ENCODE measurements at regions of chr6 and their contacts with region 1.

Region 1: DNA sequence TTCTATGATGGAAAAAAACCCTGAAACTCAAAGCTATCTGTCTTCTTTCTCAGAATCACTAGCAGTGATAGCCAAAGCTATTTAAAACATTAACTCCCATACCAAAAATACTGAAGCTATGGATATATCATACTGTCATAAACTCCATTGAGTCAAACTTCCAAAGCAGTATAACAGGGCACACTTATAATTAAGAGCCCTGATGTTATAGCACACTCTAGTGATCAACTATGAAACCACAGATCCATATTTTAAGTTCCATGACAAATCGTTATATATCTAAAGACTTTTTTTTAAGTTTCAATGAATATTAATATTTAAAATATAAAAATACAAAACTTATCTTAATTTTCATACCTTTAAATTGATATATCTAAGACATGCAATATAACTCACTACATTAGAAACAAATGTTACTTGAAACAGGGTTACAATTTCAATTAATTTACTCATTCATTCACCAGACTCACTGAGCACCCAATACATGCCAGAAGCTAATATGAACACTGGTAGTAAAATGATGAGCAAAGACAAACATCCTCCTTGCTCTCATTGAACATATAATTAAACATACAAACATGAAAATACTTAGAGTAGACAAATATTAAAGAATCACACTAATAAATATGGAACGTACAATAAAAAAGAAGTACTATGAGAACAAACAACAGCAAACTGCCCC is 69.3 kb downstream of the IBTK start:
- DNase-seq: no peak
- ATAC-seq: peak in 6 of 8 donors; percentile 63 to 84 (median 80)
- H3K4me3 ChIP-seq: no peak overlapping the region
- H3K27ac ChIP-seq: peak overlapping the region in 3 of 10 donors; percentile 1 to 42 (median 16)
- H3K4me1 ChIP-seq: peaks cover 0 to 21% (median 7%) of the 10 kb centered on the region in 9 donors
- H3K27me3 ChIP-seq: no peaks in the 10 kb centered on the region
- CTCF ChIP-seq: peak; percentile 47 to 75 (median 64)

Region 2: DNA sequence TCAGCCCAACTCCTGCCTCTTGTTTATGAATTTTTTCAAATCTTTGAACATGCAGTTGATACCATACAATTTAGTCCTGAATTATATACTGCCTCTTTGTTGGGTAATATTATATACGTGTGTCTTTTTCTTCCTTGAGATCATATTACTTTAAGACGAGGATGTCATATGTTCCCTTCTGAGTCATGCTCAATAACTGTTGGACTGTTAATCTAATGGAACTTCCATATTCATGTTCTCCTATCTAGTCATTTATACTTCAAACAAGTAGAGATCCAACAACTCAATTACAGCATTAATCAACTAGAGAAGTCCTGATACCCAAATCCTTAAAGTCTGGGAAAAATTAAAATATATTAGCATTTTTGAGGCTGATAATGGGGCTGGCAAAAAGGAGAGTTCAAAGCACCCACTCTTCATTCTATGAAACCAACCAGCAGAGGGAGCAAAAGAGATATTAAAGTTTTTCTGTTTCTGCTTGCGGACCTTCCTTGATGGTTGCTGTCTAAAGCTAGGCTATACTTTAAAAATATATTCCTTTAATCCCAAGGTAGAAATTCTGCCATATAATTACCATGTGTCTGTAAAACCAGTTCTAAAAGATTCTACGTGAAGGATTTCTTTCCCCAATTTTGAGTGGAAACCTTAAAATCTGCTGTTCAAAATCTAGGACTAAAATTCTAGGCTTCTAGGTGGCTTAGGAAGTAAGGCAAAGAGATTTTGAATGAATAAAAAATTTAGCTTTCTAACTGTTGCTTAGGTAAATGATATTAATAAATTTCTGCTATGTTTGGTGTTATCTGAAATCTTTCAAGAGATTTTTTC is 1572.8 kb before region 1 on chr6:
- intact Hi-C with region 1: loop called in 1 of 10 experiments (anchors 10 kb)
- DNase-seq: peak in 1 of 2 donors; percentile 10
- ATAC-seq: peak in 2 of 8 donors; percentile 52 to 70
- H3K4me3 ChIP-seq: no peak overlapping the region
- H3K27ac ChIP-seq: no peak overlapping the region
- H3K4me1 ChIP-seq: peaks cover 0 to 21% (median 4%) of the 10 kb centered on the region in 9 donors
- H3K27me3 ChIP-seq: no peaks in the 10 kb centered on the region
- CTCF ChIP-seq: peak in 7 of 9 donors; percentile 54 to 69 (median 63)

Region 3: DNA sequence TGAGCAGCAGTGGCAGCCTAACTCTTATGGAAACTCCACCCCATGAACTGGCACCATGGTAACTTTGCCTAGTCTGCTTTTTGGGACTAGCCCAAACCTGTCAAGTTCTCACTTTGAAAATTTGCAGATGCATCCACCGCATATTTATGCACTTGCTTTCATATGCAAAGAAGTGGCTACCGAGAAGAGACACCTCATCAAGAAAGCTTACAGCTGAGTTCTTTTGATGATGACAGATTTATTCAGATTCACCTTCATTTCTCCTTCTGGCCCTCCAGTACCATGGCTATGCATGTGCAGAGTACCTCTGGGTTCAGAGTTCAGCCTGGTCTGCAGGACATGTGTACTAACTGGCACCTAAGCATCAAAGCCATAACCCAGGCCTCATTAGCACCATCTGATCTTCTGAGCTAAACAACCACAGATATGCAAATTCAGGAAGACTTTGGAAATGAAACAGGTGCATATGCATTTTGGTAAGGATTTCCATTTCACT is 271.5 kb before region 1 on chr6:
- intact Hi-C with region 1: loop called in 1 of 10 experiments (anchors 10 kb)
- DNase-seq: peak in 1 of 2 donors; percentile 37
- ATAC-seq: peak in 7 of 8 donors; percentile 49 to 76 (median 71)
- H3K4me3 ChIP-seq: no peak overlapping the region
- H3K27ac ChIP-seq: peak overlapping the region in 8 of 10 donors; percentile 4 to 71 (median 50)
- H3K4me1 ChIP-seq: peaks cover 0 to 32% (median 7%) of the 10 kb centered on the region in 9 donors
- H3K27me3 ChIP-seq: no peaks in the 10 kb centered on the region
- CTCF ChIP-seq: no peak

Region 4: GRCh38 chr6:82033631-82034211 is 144.5 kb before region 1 on chr6:
- intact Hi-C with region 1: loop called in 1 of 10 experiments (anchors 10 kb)
- DNase-seq: peak; percentile 17 to 82
- ATAC-seq: peak; percentile 75 to 93 (median 89)
- H3K4me3 ChIP-seq: no peak overlapping the region
- H3K27ac ChIP-seq: peak overlapping the region in 7 of 10 donors; percentile 10 to 57 (median 45)
- H3K4me1 ChIP-seq: peaks cover 0 to 25% (median 15%) of the 10 kb centered on the region in 9 donors
- H3K27me3 ChIP-seq: no peaks in the 10 kb centered on the region
- CTCF ChIP-seq: no peak

Region 5: DNA sequence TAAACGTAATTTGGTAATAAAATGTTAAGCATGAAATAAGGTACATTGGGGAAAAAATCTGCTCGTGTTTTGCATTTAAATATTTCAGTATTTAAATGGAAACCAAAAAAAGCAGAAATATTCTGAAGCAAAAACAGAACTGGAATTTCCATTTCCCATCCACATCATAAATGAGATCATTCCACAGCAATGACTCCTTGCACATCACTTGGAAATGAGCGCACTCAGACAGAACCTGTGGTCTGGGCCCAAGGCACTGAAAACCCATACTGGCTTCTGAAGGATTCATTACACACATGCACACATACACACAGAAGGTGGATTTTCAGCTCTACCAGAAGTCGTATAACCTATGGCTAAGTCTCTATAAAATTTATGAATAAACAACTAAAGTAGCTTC is 105.5 kb before region 1 on chr6:
- intact Hi-C with region 1: loop called in 2 of 10 experiments (anchors 10 kb)
- DNase-seq: no peak
- ATAC-seq: peak in 1 of 8 donors; percentile 23
- H3K4me3 ChIP-seq: no peak overlapping the region
- H3K27ac ChIP-seq: no peak overlapping the region
- H3K4me1 ChIP-seq: peaks cover 0 to 30% (median 5%) of the 10 kb centered on the region in 9 donors
- H3K27me3 ChIP-seq: no peaks in the 10 kb centered on the region
- CTCF ChIP-seq: no peak